Gastrocnemius medialis (tissue), 4 donors: ENCODE measurements at regions of chr2 and their contacts with region 1.

Region 1: GRCh38 chr2:95022309-95023221 is 2.9 kb upstream of the MAL start:
- DNase-seq: peak in 1 of 2 donors; percentile 27
- ATAC-seq: peak; percentile 36 to 41
- H3K4me3 ChIP-seq: no peak overlapping the region
- H3K27ac ChIP-seq: no peak overlapping the region
- H3K4me1 ChIP-seq: peaks cover 0 to 9% of the 10 kb centered on the region in 2 donors
- H3K27me3 ChIP-seq: peaks cover 28 to 48% (median 45%) of the 10 kb centered on the region in 3 donors
- CTCF ChIP-seq: peak; percentile 57 to 72 (median 63)
- POLR2A ChIP-seq: no peak

Region 2: DNA sequence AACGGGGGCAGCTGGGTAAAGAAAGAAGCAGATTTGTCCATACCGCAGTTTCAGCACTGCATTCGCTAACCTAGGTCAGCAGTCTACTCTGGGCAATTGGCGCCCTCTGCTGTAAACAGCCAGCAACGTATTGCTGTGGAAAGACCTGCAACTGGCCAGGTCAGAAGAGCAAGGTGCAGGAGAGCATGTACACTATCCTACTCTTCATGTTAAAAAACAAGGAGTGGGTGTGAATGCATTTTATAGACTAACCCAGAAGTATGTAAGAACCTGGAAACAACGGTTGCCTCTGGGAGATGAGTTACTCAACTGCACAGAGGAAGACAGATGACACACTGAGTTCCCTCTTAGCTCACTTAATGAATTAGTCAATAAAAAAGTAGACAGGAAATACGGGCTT is 92.9 kb after region 1 on chr2:
- in situ Hi-C with region 1: no loop called
- intact Hi-C with region 1: loop called (anchors 1 kb)
- DNase-seq: peak; percentile 31 to 45
- ATAC-seq: peak; percentile 73 to 90
- H3K4me3 ChIP-seq: no peak overlapping the region
- H3K27ac ChIP-seq: no peak overlapping the region
- H3K4me1 ChIP-seq: peaks cover 21 to 22% of the 10 kb centered on the region in 2 donors
- H3K27me3 ChIP-seq: no peaks in the 10 kb centered on the region
- CTCF ChIP-seq: peak; percentile 31 to 73 (median 54)
- POLR2A ChIP-seq: no peak

Region 3: DNA sequence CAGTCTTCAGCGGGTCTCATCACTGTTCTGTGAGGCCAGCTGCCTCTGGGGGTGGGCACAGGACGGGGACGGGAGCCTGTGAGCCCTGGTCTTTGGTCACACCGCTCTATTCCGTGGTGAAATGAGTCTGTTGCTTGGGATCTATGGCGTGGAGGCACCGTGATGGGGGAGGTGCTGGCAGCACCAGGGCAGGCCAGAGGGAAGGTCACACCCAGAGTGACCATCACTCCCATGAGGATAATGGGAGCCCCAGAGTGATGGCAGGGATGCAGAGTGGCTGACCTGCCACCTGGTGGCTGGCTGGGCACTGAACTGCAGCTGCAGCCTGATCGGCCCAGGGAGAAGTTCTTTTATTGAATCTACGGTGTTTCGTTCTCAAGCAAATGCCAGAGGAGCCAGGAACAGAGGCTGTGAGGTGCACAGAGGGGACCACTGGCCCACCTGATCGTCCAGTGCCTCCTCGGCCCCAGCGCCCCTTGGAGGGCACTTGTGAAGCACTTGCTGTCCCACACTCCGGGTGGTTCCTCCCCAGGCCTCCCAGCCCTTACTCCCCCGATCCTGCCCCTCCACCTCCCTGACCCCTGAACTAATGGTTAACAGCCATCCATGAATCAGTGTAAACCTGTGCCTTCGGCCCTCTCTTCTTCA is 292.5 kb after region 1 on chr2:
- in situ Hi-C with region 1: no loop called
- intact Hi-C with region 1: no loop called
- DNase-seq: no peak
- ATAC-seq: peak in 1 of 2 donors; percentile 33
- H3K4me3 ChIP-seq: no peak overlapping the region
- H3K27ac ChIP-seq: no peak overlapping the region
- H3K4me1 ChIP-seq: no peaks in the 10 kb centered on the region
- H3K27me3 ChIP-seq: peaks cover 0 to 5% (median 0%) of the 10 kb centered on the region in 3 donors
- CTCF ChIP-seq: peak in 4 of 5 experiments; percentile 27 to 39 (median 32)
- POLR2A ChIP-seq: no peak